Caco-2 (cell line): ENCODE measurements at regions of chr7 and their contacts with region 1.

Region 1: DNA sequence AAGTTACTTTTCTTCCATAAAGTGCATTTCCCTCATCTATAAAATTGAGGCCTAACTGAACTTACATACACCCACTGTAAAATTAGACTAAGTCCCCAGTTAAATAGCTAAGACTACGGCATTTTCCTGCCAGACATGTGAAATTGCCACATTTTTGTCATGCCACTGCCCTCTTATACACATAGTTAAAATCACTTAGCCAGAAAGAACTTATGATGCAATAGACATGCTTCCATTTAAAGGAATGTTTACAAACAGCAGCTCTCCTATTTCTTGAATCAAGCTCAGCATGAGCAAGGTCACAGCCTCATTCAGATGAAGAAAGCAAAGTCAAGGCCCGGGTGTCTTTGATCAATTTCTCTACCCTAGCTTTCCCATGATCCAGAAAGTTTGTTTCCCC is 175.7 kb downstream of the LRRN3 start:
- DNase-seq: no peak
- H3K4me3 ChIP-seq: no peak overlapping the region
- H3K4me3 Mint-ChIP-seq: no peak overlapping the region
- H3K27ac Mint-ChIP-seq: no peak overlapping the region
- H3K4me1 ChIP-seq: peaks cover 5% of the 10 kb centered on the region; the same call in 1 of the 2 replicates
- H3K4me1 Mint-ChIP-seq: peaks cover 19% of the 10 kb centered on the region
- H3K27me3 ChIP-seq: no peaks in the 10 kb centered on the region
- H3K27me3 Mint-ChIP-seq: no peaks in the 10 kb centered on the region
- CTCF ChIP-seq: no peak

Region 2: GRCh38 chr7:111223802-111224253 is 42.8 kb before region 1 on chr7:
- CTCF ChIA-PET with region 1: no interaction called
- POLR2A ChIA-PET with region 1: interaction called, 14 read pairs
- intact Hi-C with region 1: no loop called
- DNase-seq: no peak
- H3K4me3 ChIP-seq: no peak overlapping the region
- H3K4me3 Mint-ChIP-seq: no peak overlapping the region
- H3K27ac Mint-ChIP-seq: no peak overlapping the region
- H3K4me1 ChIP-seq: no peaks in the 10 kb centered on the region
- H3K4me1 Mint-ChIP-seq: no peaks in the 10 kb centered on the region
- H3K27me3 ChIP-seq: no peaks in the 10 kb centered on the region
- H3K27me3 Mint-ChIP-seq: no peaks in the 10 kb centered on the region
- CTCF ChIP-seq: no peak